Panc1 (cell line): ENCODE measurements at regions of chr10 and their contacts with region 1.

Region 1: DNA sequence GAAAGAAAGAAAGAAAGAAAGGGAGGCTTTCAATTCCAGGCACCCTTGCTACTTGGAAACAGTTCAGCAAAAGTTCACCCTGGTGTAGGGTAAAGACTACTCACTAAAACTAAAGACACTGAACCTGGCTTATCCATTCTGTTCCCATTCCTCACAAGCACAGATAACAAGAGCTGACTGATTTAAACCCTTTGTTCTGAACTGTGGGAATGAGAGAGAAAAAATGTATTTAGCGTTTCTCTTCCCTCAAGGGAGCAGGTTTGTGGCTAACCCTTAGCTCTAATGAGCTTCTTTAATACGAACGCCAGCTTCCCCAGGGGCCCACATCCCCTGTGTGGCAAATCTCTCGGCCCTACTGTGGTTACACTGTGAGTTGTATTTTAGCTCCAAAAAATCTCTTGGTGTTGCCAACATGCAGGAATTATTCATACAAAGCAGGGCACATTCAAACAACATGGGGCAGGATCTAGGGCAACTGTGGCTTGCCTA is 23.3 kb downstream of the PRTFDC1 start:
- DNase-seq: no peak
- ATAC-seq: no peak
- H3K4me3 ChIP-seq: no peak overlapping the region
- H3K27ac ChIP-seq: no peak overlapping the region
- H3K4me1 ChIP-seq: no peaks in the 10 kb centered on the region
- H3K27me3 ChIP-seq: no peaks in the 10 kb centered on the region
- CTCF ChIP-seq: no peak

Region 2: DNA sequence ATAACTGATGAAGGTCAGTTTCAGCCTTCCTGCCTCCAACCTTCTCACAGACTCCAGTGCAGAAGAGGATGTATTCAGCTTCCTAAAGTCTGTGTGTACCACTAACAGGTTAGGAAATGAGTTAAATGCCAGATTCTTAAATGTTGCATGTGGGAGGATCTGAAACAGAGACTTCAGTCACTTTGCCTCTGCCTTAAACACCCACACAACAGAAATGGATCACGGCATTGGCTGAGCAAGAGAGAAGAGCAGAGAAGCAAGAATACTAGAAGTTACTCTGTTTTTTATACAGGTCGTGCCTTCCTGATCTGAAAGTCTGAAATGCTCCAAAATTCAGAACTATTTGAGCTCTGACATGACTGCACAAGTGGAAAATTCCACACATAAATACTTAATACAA is 106.5 kb before region 1 on chr10:
- CTCF ChIA-PET with region 1: interaction called, 10 read pairs
- POLR2A ChIA-PET with region 1: no interaction called
- in situ Hi-C with region 1: no loop called
- intact Hi-C with region 1: no loop called
- DNase-seq: no peak
- ATAC-seq: no peak
- H3K4me3 ChIP-seq: no peak overlapping the region
- H3K27ac ChIP-seq: no peak overlapping the region
- H3K4me1 ChIP-seq: no peaks in the 10 kb centered on the region
- H3K27me3 ChIP-seq: no peaks in the 10 kb centered on the region
- CTCF ChIP-seq: no peak

Region 3: DNA sequence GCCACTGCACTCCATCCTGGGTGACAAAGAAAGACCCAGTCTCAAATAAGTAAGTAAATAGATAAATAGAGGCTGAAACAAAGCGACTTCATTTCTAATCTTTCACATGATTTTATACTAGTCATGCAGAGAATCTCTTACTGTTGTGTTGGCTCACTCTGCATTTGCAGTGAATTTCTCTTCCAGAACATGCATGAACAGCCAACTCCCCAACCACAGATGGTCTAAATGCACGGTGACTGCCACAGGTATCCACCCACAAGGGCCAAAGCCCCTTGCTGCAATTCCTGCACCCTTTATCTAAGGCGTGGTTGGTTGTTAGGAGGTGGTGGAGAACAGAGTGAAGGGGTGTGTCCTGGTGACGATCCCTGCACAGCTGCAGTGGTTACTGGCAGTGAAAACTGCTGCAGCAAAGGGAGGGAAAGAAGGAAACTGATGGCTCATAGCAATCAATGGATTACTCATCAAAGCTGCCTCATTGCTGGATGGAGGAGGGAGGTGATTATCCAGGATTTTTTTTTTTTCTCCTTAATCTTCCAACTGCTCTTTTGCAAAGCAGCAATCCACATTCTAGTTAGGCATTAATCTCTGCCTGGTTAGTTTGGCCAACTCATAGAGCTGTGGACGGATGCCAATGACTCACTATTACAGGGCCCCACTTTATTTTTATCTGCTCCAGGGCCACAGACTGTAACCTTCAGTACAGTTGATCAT is 27.3 kb before region 1 on chr10:
- CTCF ChIA-PET with region 1: no interaction called
- POLR2A ChIA-PET with region 1: no interaction called
- in situ Hi-C with region 1: no loop called
- intact Hi-C with region 1: no loop called
- DNase-seq: peak; percentile 82
- ATAC-seq: peak; percentile 92
- H3K4me3 ChIP-seq: 0 out of 4 replicates have a peak overlapping the region, but pooled peaks of 1 of the 2 experiments have one; percentile 16
- H3K27ac ChIP-seq: peak overlapping the region; percentile 61
- H3K4me1 ChIP-seq: peaks cover 15% of the 10 kb centered on the region
- H3K27me3 ChIP-seq: no peaks in the 10 kb centered on the region
- CTCF ChIP-seq: no peak